Heart right ventricle (tissue), 16 donors: ENCODE measurements at regions of chr19 and their contacts with region 1.

Region 1: GRCh38 chr19:40465557-40466150 is at the start of gene BLVRB:
- DNase-seq: peak; percentile 99 to 100
- ATAC-seq: peak; percentile 94 to 98 (median 97)
- H3K4me3 ChIP-seq: peak within 1 kb of the TSS; percentile 49 to 97 (median 74)
- H3K27ac ChIP-seq: peak within 1 kb of the TSS; percentile 70 to 94 (median 86)
- H3K4me1 ChIP-seq: peaks cover 6 to 50% (median 26%) of the 10 kb centered on the region in 9 donors
- H3K27me3 ChIP-seq: peaks cover 0 to 26% (median 0%) of the 10 kb centered on the region in 7 donors
- CTCF ChIP-seq: no peak
- total RNA-seq, gene BLVRB: 70.9 to 144 (median 91.4) TPM

Region 2: GRCh38 chr19:40403262-40403984 is 62.2 kb before region 1 on chr19:
- intact Hi-C with region 1: loop called in 1 of 10 experiments (anchors 2 kb)
- DNase-seq: peak; percentile 93 to 94
- ATAC-seq: peak; percentile 89 to 96 (median 94)
- H3K4me3 ChIP-seq: peak overlapping the region; percentile 51 to 73 (median 63)
- H3K27ac ChIP-seq: peak overlapping the region; percentile 51 to 89 (median 86)
- H3K4me1 ChIP-seq: peaks cover 0 to 21% (median 12%) of the 10 kb centered on the region in 9 donors
- H3K27me3 ChIP-seq: no peaks in the 10 kb centered on the region
- CTCF ChIP-seq: peak in 2 of 9 donors; percentile 28 to 34

Region 3: DNA sequence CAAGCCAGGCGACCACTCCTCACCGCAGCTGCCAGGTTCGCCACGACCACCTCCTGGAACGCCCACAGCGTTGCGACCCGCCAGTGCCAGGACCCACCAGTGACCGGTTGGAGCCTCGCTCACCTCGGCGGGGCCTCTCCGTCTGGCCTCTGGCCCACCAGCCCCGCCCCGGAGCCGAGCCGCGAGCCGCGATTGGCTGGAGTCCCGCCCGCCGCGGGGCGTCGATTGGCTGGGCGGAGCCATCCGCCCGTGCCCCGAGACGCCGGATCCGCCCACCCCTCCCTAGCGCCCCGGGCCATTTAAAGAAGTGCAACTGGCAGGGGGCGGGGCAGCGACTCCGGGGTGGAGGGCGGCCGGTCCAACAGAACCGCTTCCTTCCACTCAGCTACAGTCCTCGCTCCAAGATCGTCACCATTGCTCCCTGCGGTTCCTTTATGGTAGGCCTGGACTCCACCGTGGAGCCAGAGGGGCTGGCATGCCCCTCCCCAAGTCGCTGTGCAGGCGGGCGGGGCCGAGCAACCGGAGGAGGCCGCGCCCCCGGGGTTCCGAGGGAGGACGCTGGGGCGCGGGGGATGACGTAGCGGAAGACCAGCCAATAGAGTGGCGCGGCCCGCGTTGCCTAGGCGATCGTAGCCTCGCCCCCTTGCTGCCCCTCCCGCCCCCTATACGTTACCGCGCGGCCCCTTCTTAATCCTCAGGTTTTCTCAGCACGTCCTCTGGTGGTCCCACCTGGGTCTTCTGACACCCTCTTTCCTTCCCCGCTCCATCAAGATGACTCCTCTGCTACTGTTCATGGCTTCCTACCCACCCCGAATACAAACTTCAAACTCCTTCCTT is 21.2 kb before region 1 on chr19 and contains the start of gene SERTAD3:
- intact Hi-C with region 1: loop called in 3 of 10 experiments (anchors 1 to 2 kb)
- DNase-seq: peak; percentile 97
- ATAC-seq: peak; percentile 82 to 90 (median 88)
- H3K4me3 ChIP-seq: peak within 1 kb of the TSS; percentile 70 to 96 (median 85)
- H3K27ac ChIP-seq: peak within 1 kb of the TSS; percentile 80 to 100 (median 97)
- H3K4me1 ChIP-seq: peaks cover 10 to 38% (median 27%) of the 10 kb centered on the region in 9 donors
- H3K27me3 ChIP-seq: no peaks in the 10 kb centered on the region
- CTCF ChIP-seq: peak in 6 of 9 donors; percentile 15 to 51 (median 39)
- total RNA-seq, gene SERTAD3: 19.4 to 37.5 (median 27.4) TPM

Region 4: GRCh38 chr19:40529093-40529954 is 63.7 kb after region 1 on chr19:
- intact Hi-C with region 1: loop called in 3 of 10 experiments (anchors 2 to 10 kb)
- DNase-seq: peak; percentile 81 to 86
- ATAC-seq: peak; percentile 86 to 96 (median 90)
- H3K4me3 ChIP-seq: peak overlapping the region in 9 of 10 donors; percentile 44 to 65 (median 59)
- H3K27ac ChIP-seq: peak overlapping the region in 2 of 10 donors; percentile 55 to 72
- H3K4me1 ChIP-seq: peaks cover 0 to 14% (median 9%) of the 10 kb centered on the region in 9 donors
- H3K27me3 ChIP-seq: peaks cover 0 to 17% (median 0%) of the 10 kb centered on the region in 7 donors
- CTCF ChIP-seq: peak; percentile 94 to 98 (median 96)

Region 5: GRCh38 chr19:40603389-40604135 is 137.9 kb after region 1 on chr19:
- intact Hi-C with region 1: loop called in 6 of 10 experiments (anchors 2 to 10 kb)
- DNase-seq: peak; percentile 98
- ATAC-seq: peak; percentile 72 to 85 (median 81)
- H3K4me3 ChIP-seq: peak overlapping the region in 9 of 10 donors; percentile 40 to 81 (median 72)
- H3K27ac ChIP-seq: peak overlapping the region; percentile 49 to 96 (median 90)
- H3K4me1 ChIP-seq: peaks cover 26 to 88% (median 74%) of the 10 kb centered on the region in 9 donors
- H3K27me3 ChIP-seq: peaks cover 0 to 68% (median 0%) of the 10 kb centered on the region in 7 donors
- CTCF ChIP-seq: no peak

Region 6: DNA sequence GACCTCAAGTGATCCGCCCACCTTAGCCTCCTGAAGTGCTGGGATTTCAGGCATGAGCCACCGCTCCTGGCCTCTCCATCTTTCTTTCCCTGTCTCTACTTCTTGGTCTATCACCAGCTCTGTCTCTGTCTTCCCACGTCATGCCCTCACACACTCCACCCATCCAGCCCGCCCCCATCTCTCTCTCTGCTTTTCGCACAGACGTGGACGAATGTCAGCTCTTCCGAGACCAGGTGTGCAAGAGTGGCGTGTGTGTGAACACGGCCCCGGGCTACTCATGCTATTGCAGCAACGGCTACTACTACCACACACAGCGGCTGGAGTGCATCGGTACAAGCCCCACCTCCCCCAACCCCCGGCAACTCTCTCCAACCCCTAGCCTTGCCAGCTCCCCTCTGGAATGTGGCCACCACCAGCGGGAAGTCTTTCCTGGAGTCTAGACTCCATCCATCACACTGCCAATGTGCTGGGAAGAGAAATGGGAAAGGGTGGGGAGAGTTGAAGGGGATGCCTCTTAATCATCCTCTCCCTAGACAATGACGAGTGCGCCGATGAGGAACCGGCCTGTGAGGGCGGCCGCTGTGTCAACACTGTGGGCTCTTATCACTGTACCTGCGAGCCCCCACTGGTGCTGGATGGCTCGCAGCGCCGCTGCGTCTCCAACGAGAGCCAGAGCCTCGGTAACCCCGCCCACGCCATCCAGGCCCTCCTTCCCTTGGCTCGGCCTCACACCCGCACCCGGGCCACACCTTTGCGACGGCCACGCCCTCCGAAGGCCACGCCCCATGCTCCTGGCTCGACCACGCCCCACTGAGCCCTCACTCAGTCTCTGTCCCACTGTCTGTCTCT is 158.0 kb after region 1 on chr19:
- intact Hi-C with region 1: no loop called
- DNase-seq: no peak
- ATAC-seq: peak in 2 of 8 donors; percentile 10 to 13
- H3K4me3 ChIP-seq: no peak overlapping the region
- H3K27ac ChIP-seq: peak overlapping the region in 1 of 10 donors; percentile 31
- H3K4me1 ChIP-seq: peaks cover 0 to 14% (median 9%) of the 10 kb centered on the region in 9 donors
- H3K27me3 ChIP-seq: no peaks in the 10 kb centered on the region
- CTCF ChIP-seq: no peak

Region 7: DNA sequence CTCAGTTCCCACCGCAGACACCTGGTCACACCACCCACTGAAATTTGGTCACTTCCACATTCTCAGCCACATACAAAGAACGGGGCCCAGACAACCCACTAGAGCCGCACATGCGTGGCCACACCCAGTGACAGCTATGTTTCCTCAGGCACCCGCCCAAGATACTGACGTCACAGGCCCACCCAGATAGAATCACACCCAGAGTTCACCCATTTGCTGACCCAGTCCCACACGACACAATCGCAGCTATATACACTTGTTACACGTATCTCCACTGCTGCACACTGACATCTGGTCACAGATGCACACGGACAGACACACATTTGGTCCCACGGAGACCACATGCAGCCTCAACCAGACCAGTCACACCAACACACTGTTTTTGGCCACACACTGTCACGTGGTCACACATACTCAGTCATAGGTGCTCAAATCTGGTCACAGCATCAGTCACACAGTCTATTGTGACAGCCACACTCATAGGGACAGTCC is 221.9 kb after region 1 on chr19:
- intact Hi-C with region 1: no loop called
- DNase-seq: peak; percentile 81 to 82
- ATAC-seq: peak; percentile 9 to 74 (median 46)
- H3K4me3 ChIP-seq: peak overlapping the region in 3 of 10 donors; percentile 1 to 78 (median 68)
- H3K27ac ChIP-seq: peak overlapping the region in 8 of 10 donors; percentile 4 to 83 (median 64)
- H3K4me1 ChIP-seq: peaks cover 0 to 49% (median 31%) of the 10 kb centered on the region in 9 donors
- H3K27me3 ChIP-seq: no peaks in the 10 kb centered on the region
- CTCF ChIP-seq: no peak